ENCODE measurements at regions of chr1 and their contacts with region 1.

Region 1: GRCh38 chr1:28091043-28091781 is 2.8 kb upstream of the EYA3 start:
- DNase-seq: no peak
- H3K4me3 ChIP-seq: no peak overlapping the region
- H3K27ac ChIP-seq: no peak overlapping the region
- H3K4me1 ChIP-seq: peaks cover 22% of the 10 kb centered on the region
- H3K27me3 ChIP-seq: no peaks in the 10 kb centered on the region
- CTCF ChIP-seq: peak in 2 of 3 experiments; percentile 52 to 77
- POLR2A ChIP-seq: no peak

Region 2: GRCh38 chr1:27545271-27545670 is 545.9 kb before region 1 on chr1:
- intact Hi-C with region 1: no loop called
- DNase-seq: no peak
- H3K4me3 ChIP-seq: no peak overlapping the region
- H3K27ac ChIP-seq: peak overlapping the region; percentile 99
- H3K4me1 ChIP-seq: peaks cover 73% of the 10 kb centered on the region
- H3K27me3 ChIP-seq: no peaks in the 10 kb centered on the region
- CTCF ChIP-seq: no peak
- POLR2A ChIP-seq: no peak

Region 3: DNA sequence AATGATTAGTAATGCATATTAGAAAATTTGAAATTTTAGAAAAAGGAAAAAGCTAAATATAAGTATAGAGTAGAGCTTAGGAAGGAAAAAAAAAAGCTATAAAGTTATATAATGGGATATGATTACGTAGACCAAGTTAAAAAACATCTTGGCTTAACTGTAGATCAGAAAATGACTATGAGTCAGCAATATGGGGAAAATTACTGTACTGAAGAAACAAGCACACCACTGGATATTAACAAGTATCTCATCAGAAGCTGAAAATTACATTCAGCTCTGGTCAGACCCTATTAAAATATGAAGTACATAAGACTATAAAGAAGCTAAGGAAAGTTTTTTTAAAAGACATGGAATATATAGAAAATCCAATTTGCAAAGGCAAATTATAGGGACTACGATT is 122.1 kb after region 1 on chr1:
- intact Hi-C with region 1: loop called (anchors 10 kb)
- DNase-seq: no peak
- H3K4me3 ChIP-seq: no peak overlapping the region
- H3K27ac ChIP-seq: no peak overlapping the region
- H3K4me1 ChIP-seq: no peaks in the 10 kb centered on the region
- H3K27me3 ChIP-seq: no peaks in the 10 kb centered on the region
- CTCF ChIP-seq: no peak
- POLR2A ChIP-seq: no peak